Esophagus squamous epithelium (tissue), 5 donors: ENCODE measurements at regions of chr15 and their contacts with region 1.

Region 1: DNA sequence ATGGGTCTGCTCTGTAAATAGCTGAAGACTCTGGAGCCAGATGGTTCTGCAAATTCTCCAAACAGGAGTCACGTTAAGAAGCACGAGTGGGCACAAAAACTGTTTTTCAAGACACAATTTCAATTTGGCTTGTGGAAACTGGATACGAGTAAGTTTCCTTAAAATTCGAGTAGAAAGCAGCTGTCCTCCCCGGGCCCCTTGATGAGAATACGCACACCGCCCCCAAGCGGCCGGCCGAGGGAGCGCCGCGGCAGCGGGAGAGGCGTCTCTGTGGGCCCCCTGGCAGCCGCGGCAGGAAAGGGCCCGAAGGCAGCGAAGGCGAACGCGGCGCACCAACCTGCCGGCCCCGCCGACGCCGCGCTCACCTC is 778 bp upstream of the THBS1 start:
- DNase-seq: peak; percentile 50
- H3K4me3 ChIP-seq: peak overlapping the region; percentile 40 to 82 (median 63)
- H3K27ac ChIP-seq: peak overlapping the region; percentile 81 to 95 (median 92)
- H3K4me1 ChIP-seq: peaks cover 7 to 67% (median 9%) of the 10 kb centered on the region in 3 donors
- H3K27me3 ChIP-seq: peaks cover 0 to 8% (median 0%) of the 10 kb centered on the region in 4 donors
- CTCF ChIP-seq: peak; percentile 84 to 99 (median 98)
- POLR2A ChIP-seq: peak in 1 of 4 donors; percentile 13

Region 2: GRCh38 chr15:38817427-38818156 is 762.5 kb before region 1 on chr15:
- intact Hi-C with region 1: loop called (anchors 5 kb)
- DNase-seq: peak; percentile 3
- H3K4me3 ChIP-seq: peak overlapping the region in 1 of 4 donors; percentile 29
- H3K27ac ChIP-seq: no peak overlapping the region
- H3K4me1 ChIP-seq: peaks cover 0 to 12% (median 0%) of the 10 kb centered on the region in 3 donors
- H3K27me3 ChIP-seq: no peaks in the 10 kb centered on the region
- CTCF ChIP-seq: peak; percentile 80 to 99 (median 99)
- POLR2A ChIP-seq: no peak

Region 3: GRCh38 chr15:39171944-39172368 is 408.1 kb before region 1 on chr15:
- intact Hi-C with region 1: loop called (anchors 5 kb)
- DNase-seq: no peak
- H3K4me3 ChIP-seq: no peak overlapping the region
- H3K27ac ChIP-seq: peak overlapping the region in 3 of 4 donors; percentile 40 to 68 (median 59)
- H3K4me1 ChIP-seq: peaks cover 0 to 24% (median 10%) of the 10 kb centered on the region in 3 donors
- H3K27me3 ChIP-seq: no peaks in the 10 kb centered on the region
- CTCF ChIP-seq: peak in 5 of 6 experiments; percentile 35 to 75 (median 62)
- POLR2A ChIP-seq: no peak

Region 4: GRCh38 chr15:39472621-39473297 is 107.3 kb before region 1 on chr15:
- intact Hi-C with region 1: no loop called
- DNase-seq: no peak
- H3K4me3 ChIP-seq: peak overlapping the region in 1 of 4 donors; percentile 29
- H3K27ac ChIP-seq: peak overlapping the region; percentile 57 to 95 (median 84)
- H3K4me1 ChIP-seq: peaks cover 0 to 20% (median 5%) of the 10 kb centered on the region in 3 donors
- H3K27me3 ChIP-seq: no peaks in the 10 kb centered on the region
- CTCF ChIP-seq: no peak
- POLR2A ChIP-seq: peak in 1 of 4 donors; percentile 12

Region 5: GRCh38 chr15:39704689-39705088 is 124.6 kb after region 1 on chr15:
- intact Hi-C with region 1: no loop called
- DNase-seq: no peak
- H3K4me3 ChIP-seq: no peak overlapping the region
- H3K27ac ChIP-seq: no peak overlapping the region
- H3K4me1 ChIP-seq: no peaks in the 10 kb centered on the region
- H3K27me3 ChIP-seq: no peaks in the 10 kb centered on the region
- CTCF ChIP-seq: no peak
- POLR2A ChIP-seq: no peak

Region 6: GRCh38 chr15:39756806-39757522 is 176.9 kb after region 1 on chr15:
- intact Hi-C with region 1: loop called (anchors 10 kb)
- DNase-seq: no peak
- H3K4me3 ChIP-seq: no peak overlapping the region
- H3K27ac ChIP-seq: no peak overlapping the region
- H3K4me1 ChIP-seq: no peaks in the 10 kb centered on the region
- H3K27me3 ChIP-seq: no peaks in the 10 kb centered on the region
- CTCF ChIP-seq: peak; percentile 48 to 89 (median 84)
- POLR2A ChIP-seq: no peak